CD8-positive, alpha-beta T cell (primary cell): ENCODE measurements at regions of chr6 and their contacts with region 1.

Region 1: GRCh38 chr6:154675602-154676088 is 57.6 kb upstream of the SCAF8 start:
- DNase-seq: peak; percentile 77 to 95 (median 85)
- ATAC-seq: peak; percentile 100
- H3K4me3 ChIP-seq: no peak overlapping the region
- H3K4me3 Mint-ChIP-seq: no peak overlapping the region
- H3K27ac ChIP-seq: no peak overlapping the region
- H3K27ac Mint-ChIP-seq: no peak overlapping the region
- H3K4me1 ChIP-seq: no peaks in the 10 kb centered on the region
- H3K4me1 Mint-ChIP-seq: no peaks in the 10 kb centered on the region
- H3K27me3 ChIP-seq: no peaks in the 10 kb centered on the region
- H3K27me3 Mint-ChIP-seq: no peaks in the 10 kb centered on the region
- CTCF ChIP-seq: peak; percentile 100

Region 2: DNA sequence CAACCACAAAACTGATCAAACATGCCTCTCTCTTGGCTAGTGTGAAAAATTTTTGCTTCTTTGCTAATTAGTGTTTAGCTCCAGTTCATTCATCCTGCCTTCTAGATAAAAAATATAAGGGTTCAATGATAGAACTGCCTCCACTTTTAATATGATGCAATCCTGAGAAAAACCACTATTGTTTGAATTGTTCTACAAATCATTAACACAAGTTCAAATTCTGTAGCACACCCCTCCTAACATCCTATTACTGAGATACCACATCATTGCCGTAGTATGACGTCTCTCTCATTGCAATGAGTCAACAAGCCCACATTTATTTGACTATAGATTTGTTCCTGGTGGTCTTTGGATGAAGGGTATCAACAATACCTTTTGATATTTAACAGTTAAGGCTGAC is 1002.4 kb before region 1 on chr6:
- CTCF ChIA-PET with region 1: no interaction called
- POLR2A ChIA-PET with region 1: no interaction called
- intact Hi-C with region 1: no loop called
- DNase-seq: no peak
- ATAC-seq: no peak
- H3K4me3 ChIP-seq: no peak overlapping the region
- H3K4me3 Mint-ChIP-seq: no peak overlapping the region
- H3K27ac ChIP-seq: no peak overlapping the region
- H3K27ac Mint-ChIP-seq: no peak overlapping the region
- H3K4me1 ChIP-seq: no peaks in the 10 kb centered on the region
- H3K4me1 Mint-ChIP-seq: no peaks in the 10 kb centered on the region
- H3K27me3 ChIP-seq: no peaks in the 10 kb centered on the region
- H3K27me3 Mint-ChIP-seq: no peaks in the 10 kb centered on the region
- CTCF ChIP-seq: no peak

Region 3: DNA sequence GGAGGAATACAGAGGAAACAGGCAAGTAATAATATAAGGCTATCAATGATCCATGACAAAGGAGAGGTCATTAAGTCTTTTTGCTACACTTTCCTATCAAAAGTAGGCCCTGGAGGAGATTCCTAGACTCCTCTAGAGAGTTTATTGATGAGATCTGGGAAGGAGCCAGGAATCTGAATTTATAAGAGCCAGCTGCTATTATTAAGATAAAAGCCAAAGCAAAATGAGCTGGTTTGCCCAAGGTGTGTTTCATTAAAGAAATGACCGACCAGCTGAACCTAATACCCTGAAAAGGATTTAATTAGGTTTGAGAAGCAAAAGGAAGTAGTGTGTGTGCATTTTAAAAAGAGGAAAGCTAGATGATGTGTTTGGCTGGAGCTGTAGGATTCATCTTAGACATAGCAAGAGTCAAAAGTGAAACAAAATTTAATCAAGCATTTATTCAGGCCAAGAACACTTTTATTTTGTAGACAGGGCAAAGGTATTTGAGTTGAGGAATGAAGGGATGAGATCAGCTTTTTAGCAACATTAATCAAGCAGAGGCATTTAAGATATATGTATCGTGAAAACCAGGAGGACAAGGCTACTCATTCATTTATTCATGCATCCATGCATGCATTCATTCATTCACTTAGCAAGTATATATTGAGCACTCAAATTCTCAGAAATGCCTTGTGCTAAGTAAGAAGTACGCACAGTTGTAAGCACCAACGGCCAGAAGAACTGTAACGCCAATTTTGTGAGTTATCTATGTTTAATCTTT is 14.0 kb after region 1 on chr6:
- CTCF ChIA-PET with region 1: interaction called, 27 read pairs
- POLR2A ChIA-PET with region 1: interaction called, 5 read pairs
- intact Hi-C with region 1: no loop called
- DNase-seq: no peak
- ATAC-seq: no peak
- H3K4me3 ChIP-seq: no peak overlapping the region
- H3K4me3 Mint-ChIP-seq: no peak overlapping the region
- H3K27ac ChIP-seq: no peak overlapping the region
- H3K27ac Mint-ChIP-seq: no peak overlapping the region
- H3K4me1 ChIP-seq: no peaks in the 10 kb centered on the region
- H3K4me1 Mint-ChIP-seq: no peaks in the 10 kb centered on the region
- H3K27me3 ChIP-seq: no peaks in the 10 kb centered on the region
- H3K27me3 Mint-ChIP-seq: no peaks in the 10 kb centered on the region
- CTCF ChIP-seq: no peak

Region 4: DNA sequence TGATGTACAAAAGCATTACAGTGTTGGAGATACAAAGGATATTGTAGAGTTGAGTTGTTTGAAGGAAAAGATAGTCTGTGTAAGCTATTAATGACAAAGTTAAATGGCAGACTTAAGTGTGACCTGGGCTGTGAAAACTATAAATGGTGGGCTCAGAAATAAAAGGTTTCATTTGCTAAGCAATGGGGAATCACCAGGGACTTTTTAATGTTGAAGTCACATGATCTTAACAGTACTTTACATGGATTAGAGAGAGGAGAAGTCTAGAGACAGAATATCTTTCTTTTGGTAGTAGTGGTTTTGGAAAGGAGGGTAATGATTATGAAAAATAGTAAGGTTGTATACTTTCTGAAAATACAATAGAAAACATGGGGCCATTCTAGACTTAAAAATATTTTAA is 124.7 kb after region 1 on chr6:
- CTCF ChIA-PET with region 1: interaction called, 136 read pairs
- POLR2A ChIA-PET with region 1: interaction called, 4 read pairs
- intact Hi-C with region 1: loop called (anchors 1 kb)
- DNase-seq: peak in 2 of 9 experiments; percentile 20 to 52
- ATAC-seq: no peak
- H3K4me3 ChIP-seq: no peak overlapping the region
- H3K4me3 Mint-ChIP-seq: no peak overlapping the region
- H3K27ac ChIP-seq: no peak overlapping the region
- H3K27ac Mint-ChIP-seq: peak overlapping the region; percentile 69
- H3K4me1 ChIP-seq: no peaks in the 10 kb centered on the region
- H3K4me1 Mint-ChIP-seq: peaks cover 21% of the 10 kb centered on the region
- H3K27me3 ChIP-seq: no peaks in the 10 kb centered on the region
- H3K27me3 Mint-ChIP-seq: no peaks in the 10 kb centered on the region
- CTCF ChIP-seq: no peak

Region 5: DNA sequence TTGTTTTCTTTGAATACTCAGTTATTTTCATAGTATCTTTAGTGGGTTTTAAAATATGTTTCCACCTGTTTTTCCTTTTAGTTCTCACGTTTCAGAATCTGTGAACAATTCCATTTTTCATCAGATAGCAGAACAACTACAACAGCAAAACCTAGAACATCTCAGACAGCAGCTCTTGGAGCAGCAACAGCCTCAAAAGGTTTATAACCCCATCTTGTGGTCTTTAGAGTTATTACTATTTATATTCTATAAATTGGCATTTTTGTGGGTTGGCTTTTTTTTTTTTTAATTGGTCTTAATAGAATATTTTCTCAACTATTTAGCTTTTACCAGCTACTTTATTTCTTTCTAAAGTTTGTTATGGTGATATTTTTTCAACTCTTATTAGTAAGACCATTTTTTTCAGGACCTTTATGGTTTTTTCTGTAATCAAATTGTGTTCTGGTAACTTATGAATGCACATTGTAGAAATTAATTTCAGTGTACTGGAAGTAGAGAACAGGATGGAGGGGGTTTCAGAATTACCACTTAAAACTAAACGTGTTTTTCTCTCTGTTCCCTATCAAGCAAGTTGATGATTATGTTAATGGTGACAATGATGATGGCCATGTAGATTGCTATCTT is 129.8 kb after region 1 on chr6:
- CTCF ChIA-PET with region 1: interaction called, 136 read pairs
- POLR2A ChIA-PET with region 1: interaction called, 4 read pairs
- intact Hi-C with region 1: loop called (anchors 1 kb)
- DNase-seq: peak in 2 of 9 experiments; percentile 57 to 67
- ATAC-seq: peak; percentile 81
- H3K4me3 ChIP-seq: no peak overlapping the region
- H3K4me3 Mint-ChIP-seq: no peak overlapping the region
- H3K27ac ChIP-seq: no peak overlapping the region
- H3K27ac Mint-ChIP-seq: no peak overlapping the region
- H3K4me1 ChIP-seq: no peaks in the 10 kb centered on the region
- H3K4me1 Mint-ChIP-seq: peaks cover 3% of the 10 kb centered on the region
- H3K27me3 ChIP-seq: no peaks in the 10 kb centered on the region
- H3K27me3 Mint-ChIP-seq: no peaks in the 10 kb centered on the region
- CTCF ChIP-seq: peak; percentile 63

Region 6: GRCh38 chr6:154928325-154928922 is 252.8 kb after region 1 on chr6:
- CTCF ChIA-PET with region 1: interaction called, 15 read pairs
- POLR2A ChIA-PET with region 1: no interaction called
- intact Hi-C with region 1: no loop called
- DNase-seq: peak; percentile 14 to 70 (median 50)
- ATAC-seq: no peak
- H3K4me3 ChIP-seq: no peak overlapping the region
- H3K4me3 Mint-ChIP-seq: no peak overlapping the region
- H3K27ac ChIP-seq: no peak overlapping the region
- H3K27ac Mint-ChIP-seq: no peak overlapping the region
- H3K4me1 ChIP-seq: no peaks in the 10 kb centered on the region
- H3K4me1 Mint-ChIP-seq: peaks cover 9% of the 10 kb centered on the region
- H3K27me3 ChIP-seq: no peaks in the 10 kb centered on the region
- H3K27me3 Mint-ChIP-seq: no peaks in the 10 kb centered on the region
- CTCF ChIP-seq: peak; percentile 76